H1 (cell line): ENCODE measurements at regions of chr18 and their contacts with region 1.

Region 1: DNA sequence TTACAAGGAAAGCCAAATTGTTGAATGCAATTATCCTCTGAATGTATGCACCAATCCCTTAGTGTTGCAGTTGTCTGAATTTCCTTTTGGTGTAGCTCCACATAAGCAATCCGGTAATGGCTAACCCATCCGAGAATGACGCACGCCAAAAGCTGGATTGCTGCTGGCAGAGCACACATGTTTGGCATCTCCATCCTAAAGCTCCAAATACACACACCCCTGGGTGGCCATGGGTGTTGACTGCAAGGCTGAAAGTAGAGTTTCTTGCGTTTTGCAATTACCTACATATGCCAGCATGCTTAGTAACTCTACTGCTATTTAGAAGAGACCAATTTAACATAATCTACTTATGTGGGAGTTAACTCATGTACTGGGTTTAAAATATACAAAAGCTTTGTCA is 53.1 kb downstream of the KCTD1 start:
- DNase-seq: no peak
- H3K4me3 ChIP-seq: no peak overlapping the region
- H3K27ac ChIP-seq: no peak overlapping the region
- H3K4me1 ChIP-seq: no peaks in the 10 kb centered on the region
- H3K27me3 ChIP-seq: no peaks in the 10 kb centered on the region
- CTCF ChIP-seq: no peak
- EP300 ChIP-seq: no peak
- POLR2A ChIP-seq: no peak
- RAD21 ChIP-seq: no peak

Region 2: DNA sequence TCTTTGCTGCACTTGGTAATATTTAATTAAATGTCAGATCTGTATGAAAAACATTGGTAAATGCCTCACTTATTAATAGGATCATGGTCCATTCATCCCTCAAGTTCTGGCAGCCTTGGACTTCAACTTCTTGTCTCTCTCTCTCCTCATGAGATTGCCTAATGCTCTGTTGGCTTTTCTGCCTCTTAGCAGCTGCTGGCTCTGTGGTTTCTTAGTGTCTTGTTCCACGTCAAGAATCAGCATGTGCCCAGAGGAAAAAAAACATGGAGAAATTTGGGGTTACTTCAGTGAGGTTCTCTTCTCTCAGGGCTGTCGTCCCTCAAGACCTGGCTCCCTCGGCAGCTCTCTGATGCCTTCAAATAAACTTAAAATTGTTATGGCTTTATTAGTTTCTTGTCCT is 193.6 kb before region 1 on chr18:
- CTCF ChIA-PET with region 1: no interaction called
- POLR2A ChIA-PET with region 1: no interaction called
- DNase-seq: no peak
- H3K4me3 ChIP-seq: no peak overlapping the region
- H3K27ac ChIP-seq: no peak overlapping the region
- H3K4me1 ChIP-seq: no peaks in the 10 kb centered on the region
- H3K27me3 ChIP-seq: no peaks in the 10 kb centered on the region
- CTCF ChIP-seq: no peak
- EP300 ChIP-seq: no peak
- POLR2A ChIP-seq: no peak
- RAD21 ChIP-seq: no peak

Region 3: GRCh38 chr18:26480897-26481895 is 14.1 kb before region 1 on chr18:
- CTCF ChIA-PET with region 1: interaction called, 10 read pairs
- POLR2A ChIA-PET with region 1: no interaction called
- DNase-seq: no peak
- H3K4me3 ChIP-seq: no peak overlapping the region
- H3K27ac ChIP-seq: no peak overlapping the region
- H3K4me1 ChIP-seq: peaks cover 9 to 28% (median 21%) of the 10 kb centered on the region in 4 experiments
- H3K27me3 ChIP-seq: peaks cover 0 to 1% (median 0%) of the 10 kb centered on the region in 4 experiments; a peak in 1 of 7 replicates
- CTCF ChIP-seq: no peak
- EP300 ChIP-seq: no peak
- POLR2A ChIP-seq: no peak
- RAD21 ChIP-seq: no peak